Dorsolateral prefrontal cortex (tissue), 120 donors: ENCODE measurements at regions of chr3 and their contacts with region 1.

Region 1: GRCh38 chr3:101573449-101574387 is at the start of gene PCNP:
- DNase-seq: peak; percentile 98 to 99 (median 99)
- H3K4me3 ChIP-seq: peak within 1 kb of the TSS; percentile 59 to 99 (median 94)
- H3K27ac ChIP-seq: peak within 1 kb of the TSS; percentile 80 to 98 (median 95)
- H3K27me3 ChIP-seq: no peaks in the 10 kb centered on the region
- CTCF ChIP-seq: peak; percentile 76 to 99 (median 91)
- total RNA-seq, gene PCNP: 121 to 220 (median 176) TPM

Region 2: GRCh38 chr3:101512646-101513418 is 60.9 kb before region 1 on chr3 and contains the start of gene SENP7:
- intact Hi-C with region 1: loop called (anchors 2 to 5 kb)
- DNase-seq: peak; percentile 63 to 79 (median 75)
- H3K4me3 ChIP-seq: peak within 1 kb of the TSS; percentile 57 to 97 (median 87)
- H3K27ac ChIP-seq: peak within 1 kb of the TSS; percentile 71 to 98 (median 93)
- H3K27me3 ChIP-seq: peaks cover 0 to 12% (median 0%) of the 10 kb centered on the region in 45 donors
- CTCF ChIP-seq: peak in 8 of 56 donors; percentile 3 to 36 (median 13)
- total RNA-seq, gene SENP7: 16.3 to 38.9 (median 28.5) TPM

Region 3: DNA sequence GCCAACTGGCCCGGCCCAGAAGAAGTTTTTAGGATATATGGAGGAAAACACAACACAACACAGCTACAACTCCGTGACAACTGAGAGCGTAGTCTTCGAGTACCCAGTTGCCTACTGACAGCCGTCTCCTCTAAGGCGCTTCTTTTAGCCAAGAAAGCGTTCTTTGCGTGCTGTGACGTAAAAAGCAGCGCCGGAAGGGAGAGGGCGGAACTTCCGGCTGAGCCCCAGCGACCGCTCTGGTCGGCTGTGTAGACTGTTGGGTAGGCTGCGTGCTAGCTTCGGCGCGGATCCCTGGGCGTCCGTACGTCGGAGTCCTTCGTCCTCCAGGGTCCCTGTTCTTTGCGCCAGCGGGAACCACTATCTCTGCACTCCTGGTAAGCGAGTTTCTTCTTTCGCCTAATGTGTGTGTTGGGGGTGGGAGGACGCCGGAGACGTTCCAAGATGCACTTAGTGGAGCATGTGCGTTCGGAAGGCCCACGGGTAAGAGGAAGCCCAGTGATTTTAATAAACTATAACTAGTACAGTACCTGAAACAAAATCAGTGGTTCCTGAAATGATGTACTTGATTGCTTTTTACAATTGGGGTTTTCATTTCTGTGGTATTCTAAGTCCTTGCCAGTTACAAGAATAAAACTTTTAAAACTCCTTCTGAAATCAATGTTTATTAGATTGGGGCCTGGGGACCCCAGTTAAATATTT is 11.9 kb before region 1 on chr3 and contains the start of gene TRMT10C:
- intact Hi-C with region 1: loop called (anchors 1 kb)
- DNase-seq: peak; percentile 89 to 96 (median 94)
- H3K4me3 ChIP-seq: peak within 1 kb of the TSS; percentile 60 to 99 (median 89)
- H3K27ac ChIP-seq: peak within 1 kb of the TSS; percentile 4 to 93 (median 82)
- H3K27me3 ChIP-seq: peaks cover 0 to 20% (median 0%) of the 10 kb centered on the region in 45 donors
- CTCF ChIP-seq: peak in 27 of 56 donors; percentile 9 to 44 (median 26)
- total RNA-seq, gene TRMT10C: 8.7 to 26.3 (median 18.7) TPM

Region 4: GRCh38 chr3:101646726-101647125 is 73.0 kb after region 1 on chr3:
- intact Hi-C with region 1: no loop called
- DNase-seq: no peak
- H3K4me3 ChIP-seq: no peak overlapping the region
- H3K27ac ChIP-seq: no peak overlapping the region
- H3K27me3 ChIP-seq: no peaks in the 10 kb centered on the region
- CTCF ChIP-seq: no peak

Region 5: GRCh38 chr3:101676765-101677435 is 103.2 kb after region 1 on chr3 and contains the start of gene ZBTB11:
- intact Hi-C with region 1: loop called (anchors 2 kb)
- DNase-seq: peak; percentile 98 to 100 (median 99)
- H3K4me3 ChIP-seq: peak within 1 kb of the TSS; percentile 72 to 100 (median 91)
- H3K27ac ChIP-seq: peak within 1 kb of the TSS; percentile 85 to 99 (median 94)
- H3K27me3 ChIP-seq: no peaks in the 10 kb centered on the region
- CTCF ChIP-seq: peak in 55 of 56 donors; percentile 20 to 75 (median 58)
- total RNA-seq, gene ZBTB11: 19.8 to 44.1 (median 29.6) TPM

Region 6: GRCh38 chr3:101758224-101758623 is 184.5 kb after region 1 on chr3:
- intact Hi-C with region 1: no loop called
- DNase-seq: peak in 1 of 10 donors; percentile 18
- H3K4me3 ChIP-seq: peak overlapping the region in 4 of 59 donors; percentile 6 to 25 (median 12)
- H3K27ac ChIP-seq: peak overlapping the region in 58 of 59 donors; percentile 29 to 93 (median 83)
- H3K27me3 ChIP-seq: no peaks in the 10 kb centered on the region
- CTCF ChIP-seq: peak in 1 of 56 donors; percentile 9